OCI-LY7 (cell line): ENCODE measurements at regions of chr11 and their contacts with region 1.

Region 1: GRCh38 chr11:6705905-6706535 is 22.9 kb upstream of the MRPL17 start:
- DNase-seq: peak; percentile 58
- H3K4me3 ChIP-seq: no peak overlapping the region
- H3K27ac ChIP-seq: no peak overlapping the region
- H3K4me1 ChIP-seq: no peaks in the 10 kb centered on the region
- CTCF ChIP-seq: peak; percentile 98

Region 2: DNA sequence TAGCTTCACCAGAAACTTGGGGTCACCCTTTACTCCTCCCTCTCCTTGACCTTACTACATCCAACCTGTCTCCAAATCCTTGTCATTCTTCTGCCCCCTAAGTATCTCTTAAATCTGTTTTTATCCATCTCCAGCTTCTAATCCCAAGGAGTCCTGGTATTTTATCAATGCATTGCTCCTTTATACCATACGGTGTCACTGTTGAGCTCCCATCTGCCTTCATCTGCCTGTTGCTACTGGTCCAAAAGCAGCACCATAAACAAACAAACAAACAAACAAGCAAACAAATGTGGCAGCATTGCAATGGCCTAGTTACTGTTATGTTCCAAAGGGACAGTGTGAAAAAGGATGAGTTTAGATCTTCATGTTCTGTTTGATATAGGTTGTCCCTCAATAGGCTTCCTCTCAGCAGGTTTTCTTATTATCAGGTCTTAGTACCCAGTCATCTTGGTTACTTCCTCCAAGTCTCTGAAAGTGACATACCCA is 174.7 kb before region 1 on chr11:
- CTCF ChIA-PET with region 1: interaction called, 3 read pairs
- POLR2A ChIA-PET with region 1: no interaction called
- intact Hi-C with region 1: loop called (anchors 1 kb)
- DNase-seq: peak; percentile 50
- H3K4me3 ChIP-seq: no peak overlapping the region
- H3K27ac ChIP-seq: no peak overlapping the region
- H3K4me1 ChIP-seq: peaks cover 7% of the 10 kb centered on the region
- CTCF ChIP-seq: peak; percentile 94

Region 3: GRCh38 chr11:6667733-6668374 is 38.2 kb before region 1 on chr11:
- CTCF ChIA-PET with region 1: no interaction called
- POLR2A ChIA-PET with region 1: no interaction called
- intact Hi-C with region 1: no loop called
- DNase-seq: peak; percentile 53
- H3K4me3 ChIP-seq: no peak overlapping the region
- H3K27ac ChIP-seq: no peak overlapping the region
- H3K4me1 ChIP-seq: no peaks in the 10 kb centered on the region
- CTCF ChIP-seq: peak; percentile 77